ENCODE measurements at regions of chr1 and their contacts with region 1.

Region 1: DNA sequence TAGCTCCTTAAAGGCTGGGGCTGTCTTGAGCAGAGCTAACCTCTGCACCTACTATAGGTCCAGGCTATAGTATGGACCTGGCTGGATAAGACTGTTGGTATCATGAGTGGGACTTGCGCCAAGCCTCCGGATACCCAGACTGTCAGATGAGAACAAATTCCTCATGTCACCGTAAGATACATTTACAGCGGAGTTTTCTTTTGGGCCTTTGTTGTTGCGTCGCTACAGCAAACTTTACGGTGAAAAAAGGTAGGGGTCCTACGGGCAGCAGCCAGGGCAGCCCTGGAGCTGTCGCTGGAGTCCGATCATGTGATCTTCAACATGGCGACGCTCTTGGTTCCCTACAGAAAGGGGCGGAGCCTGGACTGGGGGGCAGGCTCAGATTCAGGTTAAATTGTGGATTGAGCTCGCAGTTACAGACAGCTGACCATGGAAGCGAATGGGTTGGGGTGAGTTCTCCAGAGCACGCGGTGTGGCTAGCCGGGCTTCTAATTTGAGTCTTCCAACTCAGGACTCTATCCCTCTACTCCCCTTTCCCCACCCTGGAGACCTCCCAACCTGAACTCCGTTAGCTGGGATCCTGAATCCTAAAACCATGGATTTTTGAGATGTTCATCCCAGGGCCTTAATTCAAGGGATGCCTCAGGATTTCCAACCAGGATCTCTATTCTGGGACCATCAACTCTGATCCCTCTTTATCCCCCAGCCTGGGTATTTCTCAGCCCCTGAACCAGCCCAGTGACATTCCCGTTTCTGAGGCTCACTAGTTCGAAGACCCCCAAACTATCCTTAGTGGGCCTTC is at the start of gene UROD:
- DNase-seq: peak; percentile 89
- H3K4me3 Mint-ChIP-seq: peak within 1 kb of the TSS; percentile 78
- H3K27ac Mint-ChIP-seq: peak within 1 kb of the TSS; percentile 92
- H3K4me1 Mint-ChIP-seq: peaks cover 34% of the 10 kb centered on the region
- H3K27me3 Mint-ChIP-seq: no peaks in the 10 kb centered on the region
- total RNA-seq, gene UROD: 84.8 and 85.9 TPM in 2 replicates

Region 2: DNA sequence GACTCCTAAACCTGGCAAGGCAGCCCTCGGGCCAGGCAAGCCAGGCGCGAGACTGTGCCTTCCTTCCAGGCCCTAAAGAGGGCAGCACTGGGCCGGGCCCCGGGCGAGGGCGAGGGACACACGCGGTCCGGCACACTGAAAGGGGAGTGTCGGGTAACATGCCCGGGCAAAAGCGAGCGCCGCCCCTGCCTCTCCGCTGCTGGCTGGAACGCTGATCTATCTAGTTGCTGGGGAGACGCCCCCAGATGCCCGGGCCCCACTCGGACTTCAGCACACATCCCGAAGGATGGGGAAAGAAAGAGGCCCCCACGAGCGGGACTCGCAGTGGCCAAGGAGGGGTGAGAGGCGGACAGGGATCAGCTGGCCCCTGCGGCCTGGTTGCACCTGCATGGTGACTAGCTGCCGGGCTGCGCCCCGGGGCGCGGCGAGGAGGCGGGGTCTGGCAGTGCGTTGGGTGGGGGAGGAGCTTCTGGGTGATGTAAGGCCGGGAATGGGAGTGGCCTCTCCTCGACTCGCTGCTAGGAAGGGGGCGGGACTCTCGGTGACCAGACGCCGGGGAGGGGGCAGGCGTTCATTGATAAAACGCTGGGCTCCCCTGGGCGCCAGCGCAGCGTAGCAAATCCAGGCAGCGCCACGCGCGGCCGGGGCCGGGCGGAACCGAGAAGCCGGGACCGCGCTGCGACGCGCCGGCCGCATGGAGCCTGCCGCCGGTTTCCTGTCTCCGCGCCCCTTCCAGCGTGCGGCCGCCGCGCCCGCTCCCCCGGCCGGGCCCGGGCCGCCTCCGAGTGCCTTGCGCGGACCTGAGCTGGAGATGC is 212.1 kb before region 1 on chr1 and contains the start of gene PLK3:
- intact Hi-C with region 1: loop called (anchors 5 kb)
- DNase-seq: peak; percentile 97
- H3K4me3 Mint-ChIP-seq: peak within 1 kb of the TSS; percentile 97
- H3K27ac Mint-ChIP-seq: peak within 1 kb of the TSS; percentile 99
- H3K4me1 Mint-ChIP-seq: peaks cover 23% of the 10 kb centered on the region
- H3K27me3 Mint-ChIP-seq: no peaks in the 10 kb centered on the region
- total RNA-seq, gene PLK3: 128 and 135 TPM in 2 replicates

Region 3: DNA sequence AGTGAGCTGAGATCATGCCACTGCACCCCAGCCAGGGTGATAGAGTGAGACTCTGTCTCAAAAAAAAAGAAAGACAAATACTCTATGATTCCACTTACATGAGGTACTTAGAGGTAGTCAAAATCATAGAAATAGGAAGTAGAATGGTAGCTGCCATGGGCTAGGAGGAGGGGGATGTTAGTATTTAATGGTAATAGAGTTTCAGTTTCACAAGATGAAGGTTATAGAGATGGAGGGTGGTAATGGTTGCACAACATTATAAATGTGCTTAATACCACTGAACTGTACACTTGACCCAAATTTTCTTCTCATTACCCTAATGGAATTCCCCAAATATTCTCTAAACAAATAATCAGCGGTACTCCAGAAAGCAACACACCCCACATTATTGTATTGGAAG is 38.4 kb before region 1 on chr1:
- intact Hi-C with region 1: no loop called
- DNase-seq: no peak
- H3K4me3 Mint-ChIP-seq: no peak overlapping the region
- H3K27ac Mint-ChIP-seq: no peak overlapping the region
- H3K4me1 Mint-ChIP-seq: peaks cover 2% of the 10 kb centered on the region
- H3K27me3 Mint-ChIP-seq: no peaks in the 10 kb centered on the region

Region 4: DNA sequence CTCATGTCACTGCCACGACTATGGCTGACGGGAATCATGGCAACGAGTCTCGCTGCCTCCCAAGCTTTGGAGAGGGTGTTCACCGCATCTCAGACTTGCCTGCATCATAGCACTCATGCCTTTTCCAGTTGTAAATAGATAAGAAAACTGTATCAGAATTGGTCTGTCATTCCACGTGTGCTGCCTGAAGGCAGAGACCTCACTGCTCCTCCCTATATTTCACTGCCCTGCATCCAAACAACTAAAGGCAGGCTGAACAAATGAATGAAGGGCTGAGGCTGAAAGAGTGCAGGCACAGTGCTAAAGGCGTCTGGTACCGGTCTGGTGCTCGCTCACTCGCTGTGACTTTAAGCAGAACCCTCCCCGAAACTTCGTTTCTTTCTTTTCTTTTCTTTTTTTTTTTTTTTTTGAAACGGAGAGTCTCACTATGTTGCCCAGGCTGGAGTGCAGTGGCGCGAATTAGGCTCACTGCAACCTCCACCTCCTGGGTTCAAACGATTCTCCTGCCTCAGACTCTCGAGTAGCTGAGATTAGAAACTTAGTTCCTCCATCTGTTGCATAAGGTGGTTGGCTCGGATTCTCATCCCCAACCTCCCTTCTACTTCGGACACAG is 26.2 kb before region 1 on chr1:
- intact Hi-C with region 1: loop called (anchors 1 kb)
- DNase-seq: no peak
- H3K4me3 Mint-ChIP-seq: peak overlapping the region; percentile 97
- H3K27ac Mint-ChIP-seq: peak overlapping the region; percentile 87
- H3K4me1 Mint-ChIP-seq: peaks cover 15% of the 10 kb centered on the region
- H3K27me3 Mint-ChIP-seq: no peaks in the 10 kb centered on the region

Region 5: GRCh38 chr1:45339789-45340570 is 327.9 kb after region 1 on chr1 and contains the starts of genes MUTYH and TOE1:
- intact Hi-C with region 1: loop called (anchors 1 kb)
- DNase-seq: peak; percentile 95
- H3K4me3 Mint-ChIP-seq: peak within 1 kb of the TSS; percentile 95
- H3K27ac Mint-ChIP-seq: peak within 1 kb of the TSS; percentile 99
- H3K4me1 Mint-ChIP-seq: peaks cover 37% of the 10 kb centered on the region
- H3K27me3 Mint-ChIP-seq: no peaks in the 10 kb centered on the region
- total RNA-seq, gene MUTYH: 50.1 and 50.9 TPM in 2 replicates
- total RNA-seq, gene TOE1: 26.3 and 29.3 TPM in 2 replicates

Region 6: DNA sequence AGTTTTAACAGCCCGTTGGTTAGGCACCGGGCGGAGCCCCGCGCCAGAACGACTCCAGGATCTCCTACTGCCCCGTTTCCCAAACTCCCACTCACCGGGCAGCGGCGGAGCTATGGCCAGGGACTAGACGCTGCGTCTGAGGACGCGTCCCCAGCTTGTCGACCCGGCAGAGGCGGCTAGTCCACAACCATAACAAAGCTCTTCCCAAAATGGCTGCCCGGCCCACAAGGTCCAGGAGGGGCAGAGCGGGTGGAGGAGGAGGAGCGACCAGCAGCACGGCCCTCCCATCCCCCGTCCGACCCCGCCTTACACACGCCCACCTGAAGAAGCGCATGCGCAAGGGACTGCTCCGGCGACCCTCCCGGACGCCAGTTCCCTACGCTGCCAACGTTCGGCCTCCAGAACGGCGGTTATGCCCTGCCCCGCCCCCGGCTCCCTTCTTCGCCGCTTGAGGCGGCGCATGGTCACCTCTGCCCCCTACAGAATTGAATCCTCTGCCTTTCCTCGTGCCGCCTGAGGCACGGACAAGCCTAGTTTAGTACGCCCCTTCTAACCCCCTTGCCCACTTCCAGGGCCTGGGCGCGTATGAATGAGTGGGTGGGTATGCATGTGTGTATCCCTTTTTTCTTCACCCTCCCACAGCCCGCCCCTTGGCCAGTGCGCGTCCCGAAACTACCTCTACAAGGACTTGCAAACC is 674.4 kb after region 1 on chr1 and contains the start of gene GPBP1L1:
- intact Hi-C with region 1: loop called (anchors 2 kb)
- DNase-seq: peak; percentile 96
- H3K4me3 Mint-ChIP-seq: peak within 1 kb of the TSS; percentile 98
- H3K27ac Mint-ChIP-seq: peak within 1 kb of the TSS; percentile 100
- H3K4me1 Mint-ChIP-seq: peaks cover 21% of the 10 kb centered on the region
- H3K27me3 Mint-ChIP-seq: no peaks in the 10 kb centered on the region
- total RNA-seq, gene GPBP1L1: 100 and 103 TPM in 2 replicates

Measured in activated T-helper 2 cell treated with anti-CD3 and anti-CD28 coated beads, Interferon-gamma antibody, Interleukin-2, Interleukin-4, amounts not matched to agents 10 μg/mL and 5 μg/mL and 100 μg/mL, durations not matched to agents 14 hours and 24 hours and 36 hours (primary cell).